Psoas muscle (tissue), 8 donors: ENCODE measurements at regions of chr20 and their contacts with region 1.

Region 1: DNA sequence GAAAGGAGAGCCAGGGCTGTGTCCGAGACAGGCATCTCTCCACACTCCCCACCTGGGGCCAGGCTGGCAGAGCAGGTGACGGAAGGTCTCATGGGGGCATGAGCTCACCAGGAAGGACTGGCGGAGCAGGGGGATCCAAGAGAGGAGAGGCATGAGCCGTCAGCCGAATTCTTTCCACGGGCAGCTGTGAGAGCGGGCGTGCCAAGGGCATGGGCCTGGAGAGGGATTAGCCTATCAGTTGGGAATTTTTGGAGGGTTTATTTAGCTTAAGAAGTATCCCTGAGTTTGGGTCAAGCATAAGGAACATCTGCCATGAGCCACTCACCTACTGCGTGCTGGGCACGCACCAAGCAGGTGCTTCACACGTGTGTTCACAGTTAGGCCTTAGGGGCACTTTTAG is 60.2 kb upstream of the ZNFX1 start:
- DNase-seq: no peak
- ATAC-seq: peak in 3 of 4 donors; percentile 68 to 84 (median 76)
- H3K4me3 ChIP-seq: no peak overlapping the region
- H3K27ac ChIP-seq: peak overlapping the region; percentile 13
- H3K4me1 ChIP-seq: peaks cover 4% of the 10 kb centered on the region
- H3K27me3 ChIP-seq: no peaks in the 10 kb centered on the region
- CTCF ChIP-seq: no peak

Region 2: DNA sequence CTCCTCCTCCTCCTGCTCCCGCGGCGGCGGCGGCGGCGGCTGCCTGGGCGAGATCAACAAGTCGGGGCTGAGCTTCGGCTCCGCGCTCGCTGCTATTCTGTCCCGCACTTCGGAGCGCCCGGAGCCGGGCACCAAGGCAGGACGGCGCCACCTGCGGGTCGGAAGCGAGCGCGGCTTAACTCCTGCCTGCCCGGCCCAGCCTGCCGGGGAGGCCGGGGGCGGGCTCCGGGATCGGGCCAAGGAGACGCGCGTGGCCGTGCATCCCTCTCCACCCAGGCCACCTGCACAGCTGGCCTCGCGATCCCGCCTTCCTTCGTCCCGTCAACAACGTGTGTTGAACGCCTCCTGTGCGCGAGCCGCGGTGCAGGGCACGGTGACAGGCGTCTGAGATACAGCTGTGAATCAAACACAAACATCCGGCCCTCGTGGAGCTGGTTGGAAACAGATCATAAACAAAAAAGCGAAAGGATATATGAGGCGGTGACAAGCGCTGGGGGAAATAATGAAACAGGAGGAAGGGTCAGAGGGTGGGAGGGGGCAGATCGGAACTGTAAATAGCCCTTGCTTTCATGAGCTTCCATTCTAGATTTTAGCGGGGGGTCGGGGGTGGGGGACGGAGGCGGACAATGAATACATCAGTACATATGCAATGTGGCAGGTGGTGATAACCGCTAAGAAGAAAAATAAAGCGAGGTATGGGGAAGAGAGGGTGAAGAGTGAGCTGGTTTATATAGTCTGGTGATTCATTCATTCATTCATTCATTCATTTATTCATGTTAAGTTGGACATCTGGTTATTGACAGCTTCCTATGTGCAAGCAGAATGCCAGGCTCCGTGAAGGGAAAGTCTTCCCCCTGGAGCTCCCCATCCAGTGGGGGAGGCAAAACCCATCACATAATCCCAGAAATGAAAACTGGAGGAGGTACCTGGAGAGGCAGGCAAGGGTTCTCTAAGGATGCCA is 146.4 kb after region 1 on chr20:
- intact Hi-C with region 1: loop called (anchors 1 to 2 kb)
- DNase-seq: peak; percentile 86 to 91
- ATAC-seq: peak; percentile 83 to 94 (median 90)
- H3K4me3 ChIP-seq: peak overlapping the region; percentile 65
- H3K27ac ChIP-seq: no peak overlapping the region
- H3K4me1 ChIP-seq: peaks cover 10% of the 10 kb centered on the region
- H3K27me3 ChIP-seq: peaks cover 0 to 10% (median 3%) of the 10 kb centered on the region in 3 donors
- CTCF ChIP-seq: peak; percentile 77

Region 3: GRCh38 chr20:49508435-49509199 is 170.6 kb after region 1 on chr20:
- intact Hi-C with region 1: loop called in 1 of 2 experiments (anchors 1 kb)
- DNase-seq: no peak
- ATAC-seq: peak; percentile 36 to 58 (median 46)
- H3K4me3 ChIP-seq: peak overlapping the region; percentile 33
- H3K27ac ChIP-seq: peak overlapping the region; percentile 54
- H3K4me1 ChIP-seq: peaks cover 16% of the 10 kb centered on the region
- H3K27me3 ChIP-seq: peaks cover 0 to 11% (median 0%) of the 10 kb centered on the region in 3 donors
- CTCF ChIP-seq: peak; percentile 52

Region 4: DNA sequence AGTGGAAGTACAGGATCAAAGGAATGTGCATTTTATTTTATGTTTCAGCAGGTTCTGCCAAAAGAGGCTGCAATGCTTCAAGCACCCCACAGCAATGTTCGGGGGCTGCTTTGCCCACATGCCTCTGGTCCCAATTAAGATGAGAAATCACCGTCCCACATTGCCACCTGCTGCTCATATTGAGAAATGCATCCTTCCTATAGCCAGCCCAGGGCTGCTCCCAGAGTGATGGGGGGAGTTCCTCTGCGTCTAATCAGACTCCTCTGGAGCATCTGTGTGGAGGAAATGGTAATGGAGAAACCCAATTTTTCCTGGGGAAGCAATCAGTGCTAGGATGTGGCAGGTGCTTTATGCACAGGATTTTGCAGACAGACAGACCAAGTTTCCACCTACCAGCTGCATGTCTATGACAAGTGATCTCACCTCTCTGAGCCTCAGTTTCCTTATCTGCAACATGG is 196.2 kb after region 1 on chr20:
- intact Hi-C with region 1: loop called in 1 of 2 experiments (anchors 1 kb)
- DNase-seq: no peak
- ATAC-seq: peak; percentile 69 to 83 (median 76)
- H3K4me3 ChIP-seq: no peak overlapping the region
- H3K27ac ChIP-seq: no peak overlapping the region
- H3K4me1 ChIP-seq: no peaks in the 10 kb centered on the region
- H3K27me3 ChIP-seq: no peaks in the 10 kb centered on the region
- CTCF ChIP-seq: peak; percentile 77

Region 5: DNA sequence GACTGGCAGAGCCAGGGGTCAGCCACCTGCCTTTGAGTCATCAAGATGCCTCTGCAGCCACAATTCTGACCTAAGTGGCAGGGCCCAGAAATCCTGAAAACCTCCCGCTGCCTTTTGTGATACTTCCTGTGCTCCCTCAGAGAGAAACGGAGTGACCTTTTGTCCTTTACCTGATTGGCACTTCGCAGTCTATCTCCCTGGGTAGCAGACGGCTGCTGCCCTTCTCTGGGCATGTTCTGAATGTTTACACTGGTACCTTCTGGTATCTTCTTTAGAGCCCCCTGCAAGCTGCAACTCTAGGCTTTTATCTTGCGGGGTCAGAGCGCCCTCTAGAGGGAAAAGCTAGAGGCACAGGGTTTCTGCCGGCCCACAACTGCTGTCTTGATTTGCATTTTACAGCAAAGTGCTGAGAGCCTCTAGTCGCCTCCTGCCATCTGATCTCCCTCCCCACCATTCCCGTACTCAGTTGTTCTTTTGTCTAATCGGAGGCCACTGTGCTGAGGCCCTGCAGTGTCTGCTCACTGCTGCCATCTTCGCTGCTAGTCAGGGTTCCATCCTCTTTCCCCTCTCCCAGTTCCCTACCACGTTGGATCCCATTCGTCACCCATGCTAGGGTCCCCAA is 550.4 kb after region 1 on chr20:
- intact Hi-C with region 1: loop called in 1 of 2 experiments (anchors 10 kb)
- DNase-seq: no peak
- ATAC-seq: peak; percentile 48 to 67 (median 55)
- H3K4me3 ChIP-seq: no peak overlapping the region
- H3K27ac ChIP-seq: peak overlapping the region; percentile 52
- H3K4me1 ChIP-seq: peaks cover 10% of the 10 kb centered on the region
- H3K27me3 ChIP-seq: no peaks in the 10 kb centered on the region
- CTCF ChIP-seq: peak; percentile 63